ENCODE measurements at regions of chr15 and their contacts with region 1.

Region 1: DNA sequence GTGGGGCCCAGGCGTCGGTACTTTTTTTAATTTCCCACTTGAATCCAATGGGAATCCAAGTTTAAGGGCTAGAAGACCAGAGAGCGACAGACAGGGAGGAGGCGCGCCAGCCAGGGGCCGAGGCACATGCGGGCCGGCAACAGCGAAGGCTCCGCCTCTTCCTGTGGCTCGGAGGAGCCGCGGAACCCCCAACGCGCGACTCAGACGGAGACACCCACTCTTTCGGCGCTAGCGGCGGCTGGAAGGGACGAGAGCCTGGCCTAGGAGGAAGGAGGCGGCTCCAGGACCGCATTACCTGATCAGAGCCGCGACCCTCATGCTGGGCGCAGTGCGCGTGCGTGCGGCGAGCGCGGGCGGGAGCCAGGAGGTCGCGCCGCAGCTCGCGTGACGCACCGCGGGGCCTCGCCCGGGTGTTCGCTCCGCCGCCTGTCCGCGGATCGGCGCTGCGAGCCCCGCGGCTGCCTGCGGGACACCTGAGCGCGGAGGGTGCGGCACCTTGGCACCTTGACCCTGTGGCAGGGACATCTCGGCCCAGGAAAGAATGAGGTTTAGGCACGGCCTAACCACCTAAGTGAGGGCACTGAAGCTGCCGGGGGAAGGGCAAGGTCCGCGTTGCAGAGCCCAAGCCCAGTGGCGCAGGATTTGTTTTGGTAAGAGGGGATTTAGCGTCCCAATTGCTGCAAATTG is at the start of gene DPH6:
- DNase-seq: peak; percentile 67 to 93 (median 79)
- ATAC-seq: peak; percentile 87
- H3K4me3 ChIP-seq: peak within 1 kb of the TSS; percentile 74 to 75
- H3K4me3 Mint-ChIP-seq: peak within 1 kb of the TSS; percentile 94
- H3K27ac ChIP-seq: peak within 1 kb of the TSS; percentile 93 to 97
- H3K27ac Mint-ChIP-seq: peak within 1 kb of the TSS; percentile 97
- H3K4me1 ChIP-seq: peaks cover 13% of the 10 kb centered on the region
- H3K4me1 Mint-ChIP-seq: peaks cover 22% of the 10 kb centered on the region
- H3K27me3 ChIP-seq: no peaks in the 10 kb centered on the region
- H3K27me3 Mint-ChIP-seq: no peaks in the 10 kb centered on the region
- CTCF ChIP-seq: no peak
- total RNA-seq, gene DPH6: 5.1 to 6.1 TPM

Region 2: DNA sequence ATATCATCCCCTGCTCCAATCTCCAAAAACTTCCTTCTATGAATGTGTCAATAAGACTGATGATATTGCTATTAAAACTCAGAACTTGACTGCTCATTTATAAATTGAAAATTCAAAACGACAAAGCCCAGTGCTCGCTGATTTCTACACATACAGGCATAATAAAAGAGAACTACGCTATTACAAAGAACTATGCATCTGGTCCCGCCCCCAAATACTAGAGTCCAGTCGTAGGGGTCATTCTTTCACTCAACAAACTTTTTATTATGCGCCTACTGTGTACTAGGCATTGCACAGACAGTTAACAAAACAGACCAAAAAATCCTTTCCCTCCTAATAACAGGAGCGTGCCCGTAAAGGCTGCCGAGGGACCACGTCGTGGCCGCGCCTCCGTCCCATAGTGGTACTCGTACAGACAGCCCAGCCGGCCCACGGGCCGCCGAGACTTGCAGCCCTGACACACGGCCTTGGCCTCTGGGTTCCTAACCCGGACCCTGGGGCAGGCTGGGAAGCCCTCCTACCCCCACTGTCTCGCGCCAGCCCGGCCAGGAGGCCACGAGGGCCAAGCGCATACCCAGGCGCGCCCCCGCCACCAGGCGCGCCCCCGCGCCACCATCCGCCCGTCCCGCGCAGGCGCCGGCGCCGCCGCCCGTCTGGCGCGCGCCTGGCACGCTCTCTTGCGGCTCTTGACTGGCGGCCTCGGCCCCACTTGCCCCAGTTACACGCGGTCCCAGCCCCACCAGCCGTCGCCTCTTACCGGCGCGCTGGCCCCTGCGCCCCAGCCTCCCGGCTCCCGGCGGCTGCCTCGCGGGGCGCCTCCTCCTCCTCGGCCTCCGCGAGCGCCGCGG is 1507.7 kb before region 1 on chr15:
- CTCF ChIA-PET with region 1: no interaction called
- POLR2A ChIA-PET with region 1: no interaction called
- intact Hi-C with region 1: loop called in 1 of 2 experiments (anchors 10 kb)
- DNase-seq: peak; percentile 44 to 89 (median 73)
- ATAC-seq: peak; percentile 84
- H3K4me3 ChIP-seq: peak overlapping the region; percentile 78 to 97
- H3K4me3 Mint-ChIP-seq: peak overlapping the region; percentile 94
- H3K27ac ChIP-seq: peak overlapping the region; percentile 75 to 88
- H3K27ac Mint-ChIP-seq: peak overlapping the region; percentile 94
- H3K4me1 ChIP-seq: peaks cover 19% of the 10 kb centered on the region
- H3K4me1 Mint-ChIP-seq: peaks cover 20% of the 10 kb centered on the region
- H3K27me3 ChIP-seq: no peaks in the 10 kb centered on the region
- H3K27me3 Mint-ChIP-seq: no peaks in the 10 kb centered on the region
- CTCF ChIP-seq: no peak

Region 3: GRCh38 chr15:34969340-34970097 is 576.4 kb before region 1 on chr15 and contains the start of gene AQR:
- CTCF ChIA-PET with region 1: no interaction called
- POLR2A ChIA-PET with region 1: no interaction called
- intact Hi-C with region 1: loop called in 1 of 2 experiments (anchors 5 kb)
- DNase-seq: peak; percentile 81 to 97 (median 91)
- ATAC-seq: peak; percentile 98
- H3K4me3 ChIP-seq: peak within 1 kb of the TSS; percentile 65 to 73
- H3K4me3 Mint-ChIP-seq: peak within 1 kb of the TSS; percentile 98
- H3K27ac ChIP-seq: peak within 1 kb of the TSS; percentile 62 to 72
- H3K27ac Mint-ChIP-seq: peak within 1 kb of the TSS; percentile 92
- H3K4me1 ChIP-seq: peaks cover 27% of the 10 kb centered on the region
- H3K4me1 Mint-ChIP-seq: peaks cover 50% of the 10 kb centered on the region
- H3K27me3 ChIP-seq: no peaks in the 10 kb centered on the region
- H3K27me3 Mint-ChIP-seq: no peaks in the 10 kb centered on the region
- CTCF ChIP-seq: peak; percentile 73
- total RNA-seq, gene AQR: 31.3 to 37.1 TPM

Region 4: DNA sequence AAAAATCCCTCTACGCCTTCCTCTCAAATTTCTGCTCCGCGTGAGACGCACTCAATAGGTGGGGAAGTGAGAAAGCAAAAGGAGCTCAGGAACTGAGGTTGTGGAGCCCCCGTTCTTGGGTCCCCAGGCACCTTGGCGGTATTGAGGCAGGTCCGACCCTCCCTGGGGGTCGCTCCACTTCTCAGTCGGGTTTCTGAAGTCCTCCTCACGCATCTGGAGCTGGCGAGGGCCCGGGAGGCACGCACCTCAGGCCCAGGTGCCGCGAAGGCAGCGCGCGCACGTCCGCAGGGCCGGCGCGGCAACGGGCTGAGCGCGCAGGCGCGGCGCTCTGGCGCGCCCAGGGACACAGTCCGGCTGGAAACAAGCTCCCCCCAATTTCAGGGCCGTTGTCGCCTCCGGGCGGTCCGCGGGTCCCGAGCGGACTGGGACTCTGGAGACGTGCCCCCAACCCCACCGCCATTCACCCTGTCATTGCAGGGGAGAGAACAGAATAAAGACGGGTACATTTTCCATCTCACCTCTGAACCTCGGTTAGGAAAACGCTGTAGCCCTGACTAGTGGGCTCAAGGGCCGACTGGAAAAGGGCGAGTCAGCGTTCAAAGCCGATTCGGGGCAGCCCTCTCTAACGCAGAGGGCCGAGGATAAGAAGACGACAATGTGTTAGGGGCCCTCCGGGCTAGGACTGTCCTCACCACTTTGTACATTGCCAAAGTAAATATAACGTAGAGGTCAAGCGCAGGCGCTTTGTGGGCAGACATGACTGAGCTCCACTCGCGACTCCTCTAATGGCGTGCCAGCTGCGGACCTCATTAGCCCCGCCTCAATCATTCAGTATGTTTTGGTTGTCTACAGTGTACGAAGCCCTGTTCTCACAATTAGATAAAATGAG is 557.7 kb before region 1 on chr15 and contains the start of gene ZNF770:
- CTCF ChIA-PET with region 1: no interaction called
- POLR2A ChIA-PET with region 1: no interaction called
- intact Hi-C with region 1: loop called (anchors 1 kb)
- DNase-seq: peak; percentile 72 to 93 (median 81)
- ATAC-seq: peak; percentile 89
- H3K4me3 ChIP-seq: peak within 1 kb of the TSS; percentile 99 to 100
- H3K4me3 Mint-ChIP-seq: peak within 1 kb of the TSS; percentile 99
- H3K27ac ChIP-seq: peak within 1 kb of the TSS; percentile 95 to 96
- H3K27ac Mint-ChIP-seq: peak within 1 kb of the TSS; percentile 99
- H3K4me1 ChIP-seq: peaks cover 24% of the 10 kb centered on the region
- H3K4me1 Mint-ChIP-seq: peaks cover 45% of the 10 kb centered on the region
- H3K27me3 ChIP-seq: no peaks in the 10 kb centered on the region
- H3K27me3 Mint-ChIP-seq: peaks cover 1% of the 10 kb centered on the region
- CTCF ChIP-seq: no peak
- total RNA-seq, gene ZNF770: 32.9 to 37.7 TPM

Region 5: GRCh38 chr15:35519541-35520149 is 26.3 kb before region 1 on chr15:
- CTCF ChIA-PET with region 1: no interaction called
- POLR2A ChIA-PET with region 1: no interaction called
- intact Hi-C with region 1: loop called in 1 of 2 experiments (anchors 2 kb)
- DNase-seq: peak in 2 of 9 experiments; percentile 55 to 63
- ATAC-seq: no peak
- H3K4me3 ChIP-seq: no peak overlapping the region
- H3K4me3 Mint-ChIP-seq: no peak overlapping the region
- H3K27ac ChIP-seq: no peak overlapping the region
- H3K27ac Mint-ChIP-seq: no peak overlapping the region
- H3K4me1 ChIP-seq: no peaks in the 10 kb centered on the region
- H3K4me1 Mint-ChIP-seq: peaks cover 6% of the 10 kb centered on the region
- H3K27me3 ChIP-seq: no peaks in the 10 kb centered on the region
- H3K27me3 Mint-ChIP-seq: no peaks in the 10 kb centered on the region
- CTCF ChIP-seq: peak; percentile 79

Region 6: DNA sequence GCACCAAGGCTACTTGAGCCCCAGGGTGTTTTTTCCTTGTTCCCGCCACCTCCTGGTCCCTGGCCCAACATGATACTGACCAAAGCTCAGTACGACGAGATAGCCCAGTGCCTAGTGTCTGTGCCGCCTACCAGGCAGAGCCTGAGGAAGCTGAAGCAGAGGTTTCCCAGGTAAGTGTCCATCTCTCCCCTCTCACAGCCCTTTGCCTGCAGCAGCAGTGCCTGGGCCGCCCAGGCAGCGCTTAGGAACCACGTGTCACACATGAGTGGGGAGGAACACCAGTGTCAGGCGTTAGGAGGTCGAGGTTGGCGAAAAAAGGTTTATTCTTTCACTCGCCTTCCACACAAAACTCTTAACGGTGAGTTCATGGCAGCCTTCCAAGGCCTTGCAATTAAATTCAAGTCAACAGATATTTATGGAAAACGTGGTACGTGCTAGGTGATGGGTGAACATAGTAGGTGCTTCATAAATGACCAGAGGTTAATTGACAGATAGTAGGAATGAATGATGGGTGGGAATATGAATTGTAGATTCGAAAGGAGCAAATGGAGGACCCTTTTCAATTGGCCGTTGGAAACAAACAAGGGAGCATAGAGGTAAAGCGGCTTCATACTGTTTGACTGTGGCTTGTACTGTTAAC is 1033.9 kb after region 1 on chr15:
- CTCF ChIA-PET with region 1: no interaction called
- POLR2A ChIA-PET with region 1: interaction called, 3 read pairs
- intact Hi-C with region 1: loop called (anchors 1 kb)
- DNase-seq: peak in 6 of 9 experiments; percentile 1 to 57 (median 24)
- ATAC-seq: peak; percentile 22
- H3K4me3 ChIP-seq: peak overlapping the region; percentile 87 to 95
- H3K4me3 Mint-ChIP-seq: peak overlapping the region; percentile 91
- H3K27ac ChIP-seq: peak overlapping the region; percentile 74 to 93
- H3K27ac Mint-ChIP-seq: peak overlapping the region; percentile 93
- H3K4me1 ChIP-seq: peaks cover 12% of the 10 kb centered on the region
- H3K4me1 Mint-ChIP-seq: peaks cover 32% of the 10 kb centered on the region
- H3K27me3 ChIP-seq: no peaks in the 10 kb centered on the region
- H3K27me3 Mint-ChIP-seq: no peaks in the 10 kb centered on the region
- CTCF ChIP-seq: no peak